Posterior vena cava (tissue), 2 donors: ENCODE measurements at regions of chr6 and their contacts with region 1.

Region 1: GRCh38 chr6:111238464-111239119 is 151.3 kb downstream of the SLC16A10 start:
- DNase-seq: no peak

Region 2: DNA sequence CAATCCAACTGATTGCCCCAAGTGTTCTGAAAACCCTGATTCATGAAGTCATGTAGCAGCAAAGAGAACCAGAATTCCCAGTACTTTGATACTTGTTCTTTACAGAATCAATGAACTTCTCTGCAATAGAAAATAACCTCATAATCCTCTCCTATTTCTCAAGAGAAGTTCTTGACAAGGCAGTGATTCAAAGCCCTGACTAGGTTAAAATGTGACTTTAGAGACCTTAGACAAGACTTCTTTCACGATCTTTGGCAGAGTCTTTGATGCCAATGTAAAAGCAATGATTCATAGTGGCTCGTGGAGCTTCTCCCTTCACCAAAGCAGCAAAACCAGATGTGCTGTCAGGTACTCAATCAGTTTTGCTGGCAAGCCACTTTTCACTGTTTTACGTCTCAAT is 518.5 kb before region 1 on chr6:
- intact Hi-C with region 1: no loop called
- DNase-seq: no peak

Region 3: GRCh38 chr6:111220383-111221031 is 18.1 kb before region 1 on chr6:
- intact Hi-C with region 1: loop called in 1 of 2 experiments (anchors 1 kb)
- DNase-seq: no peak